B cell (primary cell): ENCODE measurements at regions of chr11 and their contacts with region 1.

Region 1: DNA sequence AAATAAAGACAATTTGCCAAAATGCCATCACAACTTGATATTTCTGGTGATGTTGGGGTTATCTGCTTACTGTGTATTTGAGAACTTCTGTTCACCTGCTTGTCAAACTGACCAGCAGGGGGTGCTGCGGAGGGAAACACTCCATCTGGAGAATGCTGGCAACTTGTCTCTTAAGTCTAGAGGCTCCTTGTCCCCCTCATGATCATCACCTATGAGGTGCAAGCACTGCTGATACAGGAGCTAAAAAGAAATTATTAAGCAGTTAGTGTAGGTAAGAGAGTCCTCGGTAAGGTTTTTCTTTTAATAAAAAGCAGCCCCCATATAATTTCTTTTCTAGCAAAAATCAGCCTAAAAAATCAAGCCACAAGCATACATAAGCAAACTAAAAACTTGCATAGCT is 32.7 kb upstream of the GLYATL1B start:
- DNase-seq: peak; percentile 77
- ATAC-seq: no peak
- H3K4me3 ChIP-seq: no peak overlapping the region
- H3K4me3 Mint-ChIP-seq: peak overlapping the region; percentile 36
- H3K27ac ChIP-seq: no peak overlapping the region
- H3K27ac Mint-ChIP-seq: no peak overlapping the region
- H3K4me1 ChIP-seq: peaks cover 58 to 66% of the 10 kb centered on the region in 2 donors
- H3K4me1 Mint-ChIP-seq: peaks cover 68% of the 10 kb centered on the region
- H3K27me3 ChIP-seq: no peaks in the 10 kb centered on the region
- H3K27me3 Mint-ChIP-seq: no peaks in the 10 kb centered on the region
- CTCF ChIP-seq: peak; percentile 73

Region 2: DNA sequence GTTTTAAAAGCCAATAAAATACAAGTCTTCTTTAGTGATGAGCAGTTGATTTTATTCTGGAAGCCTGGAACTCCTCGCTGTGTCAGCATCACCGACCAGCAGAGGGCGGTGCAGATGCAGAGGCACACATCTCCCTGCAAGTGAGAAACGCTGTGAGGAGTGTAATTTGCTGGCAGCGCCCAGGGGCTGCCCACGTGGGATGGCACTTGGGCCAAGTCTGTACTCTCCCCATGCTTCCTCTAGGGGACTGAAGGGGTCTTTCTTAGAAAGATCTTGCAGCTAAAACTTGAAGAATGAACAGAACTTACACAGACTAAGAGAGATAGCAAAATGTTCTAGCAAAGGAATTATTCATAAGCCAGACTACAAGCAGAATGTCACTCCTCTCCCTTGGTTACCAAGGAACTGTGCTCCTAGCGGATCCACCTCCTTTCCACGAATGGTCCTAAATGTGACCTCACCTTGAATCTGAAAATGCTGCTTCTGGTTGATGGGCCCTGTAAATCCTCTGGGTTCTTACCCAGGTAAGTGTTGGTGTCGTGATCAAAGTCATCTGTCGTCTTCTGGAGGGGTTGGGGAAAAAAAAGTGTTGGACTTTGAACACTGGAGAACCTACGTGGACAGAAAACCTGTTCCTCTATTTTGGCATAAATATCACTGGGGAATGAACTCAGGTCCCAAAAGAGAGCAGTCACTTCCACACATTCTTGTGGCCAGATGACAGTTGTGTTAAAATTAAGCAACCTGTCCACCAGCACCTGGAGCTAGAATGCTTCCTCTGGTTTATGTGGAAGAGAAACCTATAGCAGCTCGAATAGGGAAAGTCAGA is 399.1 kb before region 1 on chr11:
- CTCF ChIA-PET with region 1: interaction called, 12 read pairs
- POLR2A ChIA-PET with region 1: no interaction called
- intact Hi-C with region 1: loop called (anchors 1 kb)
- DNase-seq: peak; percentile 81
- ATAC-seq: peak; percentile 98
- H3K4me3 ChIP-seq: no peak overlapping the region
- H3K4me3 Mint-ChIP-seq: no peak overlapping the region
- H3K27ac ChIP-seq: no peak overlapping the region
- H3K27ac Mint-ChIP-seq: no peak overlapping the region
- H3K4me1 ChIP-seq: peaks cover 0 to 5% of the 10 kb centered on the region in 2 donors
- H3K4me1 Mint-ChIP-seq: peaks cover 4% of the 10 kb centered on the region
- H3K27me3 ChIP-seq: no peaks in the 10 kb centered on the region
- H3K27me3 Mint-ChIP-seq: no peaks in the 10 kb centered on the region
- CTCF ChIP-seq: peak; percentile 93

Region 3: GRCh38 chr11:58880625-58881024 is 172.8 kb before region 1 on chr11:
- CTCF ChIA-PET with region 1: no interaction called
- POLR2A ChIA-PET with region 1: no interaction called
- intact Hi-C with region 1: no loop called
- DNase-seq: no peak
- ATAC-seq: no peak
- H3K4me3 ChIP-seq: no peak overlapping the region
- H3K4me3 Mint-ChIP-seq: no peak overlapping the region
- H3K27ac ChIP-seq: no peak overlapping the region
- H3K27ac Mint-ChIP-seq: no peak overlapping the region
- H3K4me1 ChIP-seq: no peaks in the 10 kb centered on the region
- H3K4me1 Mint-ChIP-seq: no peaks in the 10 kb centered on the region
- H3K27me3 ChIP-seq: peaks cover 0 to 3% (median 1%) of the 10 kb centered on the region in 4 experiments
- H3K27me3 Mint-ChIP-seq: peaks cover 36% of the 10 kb centered on the region
- CTCF ChIP-seq: no peak

Region 4: DNA sequence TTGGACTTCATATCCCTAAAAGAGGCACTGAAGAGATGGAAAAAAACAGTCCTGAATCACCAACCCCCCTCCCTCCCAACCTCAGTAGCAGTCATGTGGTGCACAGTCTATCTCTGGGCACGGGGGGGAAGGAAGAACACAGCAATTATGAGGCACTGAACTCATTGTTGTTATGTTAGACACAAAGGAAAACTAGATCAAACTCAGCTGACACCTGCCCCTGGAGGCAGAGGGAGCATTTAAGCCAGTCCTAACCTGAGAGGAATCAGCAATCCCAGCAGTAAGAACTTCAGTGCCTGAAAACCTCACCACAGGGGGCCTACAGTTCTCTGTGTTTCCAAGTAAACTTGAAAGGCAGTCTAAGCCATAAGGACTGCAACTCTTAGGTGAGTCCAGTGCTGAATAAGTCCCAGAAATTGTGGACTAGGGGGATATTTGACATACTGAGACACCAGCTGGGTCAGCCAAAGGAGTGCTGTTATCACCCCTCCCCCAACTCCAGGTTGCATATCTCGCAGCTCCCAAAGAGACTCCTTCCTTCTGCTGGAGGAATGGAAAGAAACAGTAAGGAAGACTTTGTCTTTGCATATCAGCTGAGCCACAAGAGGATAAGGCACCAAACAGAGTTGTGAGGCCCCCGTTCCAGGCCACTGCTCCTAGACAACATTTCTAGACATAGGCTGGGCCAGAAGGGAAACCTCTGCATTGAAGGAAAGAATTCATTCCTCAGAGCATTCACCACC is 41.6 kb before region 1 on chr11:
- CTCF ChIA-PET with region 1: interaction called, 7 read pairs
- POLR2A ChIA-PET with region 1: no interaction called
- intact Hi-C with region 1: loop called (anchors 5 kb)
- DNase-seq: peak; percentile 42
- ATAC-seq: peak; percentile 64
- H3K4me3 ChIP-seq: no peak overlapping the region
- H3K4me3 Mint-ChIP-seq: peak overlapping the region; percentile 37
- H3K27ac ChIP-seq: peak overlapping the region; percentile 19 to 79
- H3K27ac Mint-ChIP-seq: peak overlapping the region; percentile 83
- H3K4me1 ChIP-seq: peaks cover 38 to 40% of the 10 kb centered on the region in 2 donors
- H3K4me1 Mint-ChIP-seq: peaks cover 57% of the 10 kb centered on the region
- H3K27me3 ChIP-seq: no peaks in the 10 kb centered on the region
- H3K27me3 Mint-ChIP-seq: no peaks in the 10 kb centered on the region
- CTCF ChIP-seq: no peak

Region 5: DNA sequence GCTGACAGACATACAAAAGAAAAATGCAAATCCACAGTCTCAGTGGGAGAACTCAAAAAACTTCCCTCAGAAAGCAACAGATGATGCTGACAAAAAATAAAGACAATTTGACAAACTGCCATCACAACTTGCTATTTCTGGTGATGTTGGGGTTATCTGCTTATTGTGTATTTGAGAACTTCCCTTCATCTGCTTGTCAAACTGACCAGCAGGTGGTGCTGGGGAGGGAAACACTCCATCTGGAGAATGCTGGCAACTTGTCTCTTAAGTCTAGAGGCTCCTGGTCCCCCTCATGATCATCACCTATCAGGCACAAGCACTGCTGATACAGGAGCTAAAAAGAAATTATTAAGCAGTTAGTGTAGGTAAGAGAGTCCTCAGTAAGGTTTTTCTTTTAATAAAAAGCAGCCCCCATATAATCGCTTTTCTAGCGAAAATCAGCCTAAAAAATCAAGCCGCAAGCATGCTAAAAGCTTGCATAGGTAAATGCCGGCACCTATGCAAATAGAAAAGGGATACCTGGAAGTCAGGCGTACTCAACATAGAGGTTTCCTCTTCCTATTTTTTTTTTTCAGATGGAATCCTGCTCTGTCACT is 43.8 kb after region 1 on chr11:
- CTCF ChIA-PET with region 1: interaction called, 50 read pairs
- POLR2A ChIA-PET with region 1: interaction called, 8 read pairs
- intact Hi-C with region 1: loop called (anchors 1 kb)
- DNase-seq: peak; percentile 77
- ATAC-seq: peak; percentile 29
- H3K4me3 ChIP-seq: peak overlapping the region in 4 of 5 experiments; percentile 8 to 37 (median 34)
- H3K4me3 Mint-ChIP-seq: peak overlapping the region; percentile 64
- H3K27ac ChIP-seq: peak overlapping the region; percentile 65 to 85
- H3K27ac Mint-ChIP-seq: peak overlapping the region; percentile 91
- H3K4me1 ChIP-seq: peaks cover 77 to 89% of the 10 kb centered on the region in 2 donors
- H3K4me1 Mint-ChIP-seq: peaks cover 86% of the 10 kb centered on the region
- H3K27me3 ChIP-seq: no peaks in the 10 kb centered on the region
- H3K27me3 Mint-ChIP-seq: no peaks in the 10 kb centered on the region
- CTCF ChIP-seq: peak; percentile 72

Region 6: GRCh38 chr11:59142530-59143507 is 89.4 kb after region 1 on chr11 and contains the start of gene FAM111A:
- CTCF ChIA-PET with region 1: interaction called, 14 read pairs
- POLR2A ChIA-PET with region 1: interaction called, 5 read pairs
- intact Hi-C with region 1: loop called (anchors 1 kb)
- DNase-seq: peak; percentile 91
- ATAC-seq: peak; percentile 74
- H3K4me3 ChIP-seq: peak within 1 kb of the TSS; percentile 82 to 94 (median 89)
- H3K4me3 Mint-ChIP-seq: peak within 1 kb of the TSS; percentile 97
- H3K27ac ChIP-seq: peak within 1 kb of the TSS; percentile 88 to 90
- H3K27ac Mint-ChIP-seq: peak within 1 kb of the TSS; percentile 87
- H3K4me1 ChIP-seq: peaks cover 40 to 45% of the 10 kb centered on the region in 2 donors
- H3K4me1 Mint-ChIP-seq: peaks cover 68% of the 10 kb centered on the region
- H3K27me3 ChIP-seq: no peaks in the 10 kb centered on the region
- H3K27me3 Mint-ChIP-seq: no peaks in the 10 kb centered on the region
- CTCF ChIP-seq: no peak
- total RNA-seq, gene FAM111A: 120 and 126 TPM in 2 replicates

Region 7: DNA sequence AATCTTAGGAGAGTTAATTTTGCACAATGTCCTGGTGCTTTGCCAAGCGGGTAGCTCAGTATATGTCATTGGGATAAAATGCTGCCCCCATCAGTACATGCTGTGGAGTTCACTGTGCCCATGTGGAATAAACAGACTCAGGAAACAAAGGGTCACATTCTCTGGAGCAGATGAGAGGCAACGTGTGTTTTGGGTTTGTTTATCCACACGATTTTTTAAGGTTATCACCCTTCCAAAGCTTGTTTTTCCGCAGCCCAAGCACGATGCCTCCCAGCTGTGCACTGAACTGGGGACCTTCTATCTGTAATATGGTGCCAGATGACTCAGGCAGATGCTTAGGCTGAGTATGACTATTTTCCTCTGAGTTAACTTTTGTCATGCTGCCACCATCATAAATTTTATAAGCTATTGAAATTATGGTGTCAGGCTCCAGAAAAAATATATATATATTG is 409.8 kb after region 1 on chr11:
- CTCF ChIA-PET with region 1: no interaction called
- POLR2A ChIA-PET with region 1: no interaction called
- intact Hi-C with region 1: no loop called
- DNase-seq: no peak
- ATAC-seq: no peak
- H3K4me3 ChIP-seq: no peak overlapping the region
- H3K4me3 Mint-ChIP-seq: no peak overlapping the region
- H3K27ac ChIP-seq: no peak overlapping the region
- H3K27ac Mint-ChIP-seq: no peak overlapping the region
- H3K4me1 ChIP-seq: no peaks in the 10 kb centered on the region
- H3K4me1 Mint-ChIP-seq: no peaks in the 10 kb centered on the region
- H3K27me3 ChIP-seq: peaks cover 0 to 4% (median 0%) of the 10 kb centered on the region in 4 experiments
- H3K27me3 Mint-ChIP-seq: peaks cover 37% of the 10 kb centered on the region
- CTCF ChIP-seq: no peak